Heart left ventricle (tissue), 16 donors: ENCODE measurements at regions of chr18 and their contacts with region 1.

Region 1: GRCh38 chr18:34493099-34493544 is 217.0 kb upstream of the DTNA start:
- DNase-seq: peak; percentile 83 to 91 (median 84)
- ATAC-seq: peak; percentile 89 to 95 (median 92)
- H3K4me3 ChIP-seq: peak overlapping the region; percentile 37 to 73 (median 66)
- H3K27ac ChIP-seq: peak overlapping the region; percentile 72 to 91 (median 85)
- H3K4me1 ChIP-seq: peaks cover 0 to 20% (median 9%) of the 10 kb centered on the region in 12 donors
- H3K27me3 ChIP-seq: peaks cover 0 to 12% (median 0%) of the 10 kb centered on the region in 9 donors
- CTCF ChIP-seq: no peak
- POLR2A ChIP-seq: no peak

Region 2: GRCh38 chr18:34562252-34562870 is 69.2 kb after region 1 on chr18:
- intact Hi-C with region 1: loop called in 1 of 10 experiments (anchors 10 kb)
- DNase-seq: no peak
- ATAC-seq: peak; percentile 85 to 93 (median 90)
- H3K4me3 ChIP-seq: peak overlapping the region in 4 of 12 donors; percentile 17 to 28 (median 22)
- H3K27ac ChIP-seq: peak overlapping the region; percentile 17 to 81 (median 58)
- H3K4me1 ChIP-seq: peaks cover 0 to 13% (median 2%) of the 10 kb centered on the region in 12 donors
- H3K27me3 ChIP-seq: no peaks in the 10 kb centered on the region
- CTCF ChIP-seq: no peak
- POLR2A ChIP-seq: no peak

Region 3: DNA sequence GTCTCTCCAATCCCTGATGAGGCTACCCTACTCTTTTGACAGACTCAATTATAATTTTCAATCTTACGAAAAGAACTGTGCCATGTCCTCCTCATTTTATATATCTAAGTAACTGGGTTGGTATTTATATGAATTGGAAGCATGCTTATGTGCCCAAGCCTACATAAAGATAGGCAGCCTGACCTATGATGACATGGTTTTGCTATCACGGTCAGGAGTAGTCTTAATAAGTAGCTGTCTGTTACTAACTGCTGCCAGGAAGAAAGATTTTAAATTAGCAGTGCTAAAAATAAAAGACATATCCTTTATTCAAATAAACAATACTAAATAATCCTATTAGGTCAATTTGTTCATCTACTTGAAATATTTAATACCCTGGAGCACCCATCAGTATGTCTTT is 114.9 kb after region 1 on chr18:
- intact Hi-C with region 1: no loop called
- DNase-seq: no peak
- ATAC-seq: peak in 3 of 4 donors; percentile 33 to 70 (median 66)
- H3K4me3 ChIP-seq: no peak overlapping the region
- H3K27ac ChIP-seq: peak overlapping the region in 9 of 12 donors; percentile 3 to 53 (median 33)
- H3K4me1 ChIP-seq: peaks cover 0 to 47% (median 15%) of the 10 kb centered on the region in 12 donors
- H3K27me3 ChIP-seq: peaks cover 0 to 2% (median 0%) of the 10 kb centered on the region in 9 donors
- CTCF ChIP-seq: no peak
- POLR2A ChIP-seq: no peak

Region 4: DNA sequence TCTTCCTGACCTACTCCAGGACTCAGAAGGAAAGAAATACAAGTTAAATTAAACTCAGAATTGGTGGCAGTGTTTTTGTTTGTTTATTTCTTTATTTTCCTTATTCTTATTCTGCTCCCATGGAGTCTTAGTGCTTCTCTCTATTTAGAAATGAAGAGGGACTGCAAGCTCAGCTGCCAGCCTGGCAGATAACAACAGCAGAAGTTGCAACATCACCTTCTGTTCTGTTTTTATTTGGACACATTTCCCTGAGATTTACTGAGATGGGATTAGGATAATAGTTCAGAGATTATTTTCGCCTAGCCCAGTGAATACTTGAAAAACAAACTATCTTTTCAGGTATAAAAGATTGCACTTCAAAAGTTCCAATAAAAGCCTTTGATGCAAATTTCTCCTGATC is 146.6 kb after region 1 on chr18:
- intact Hi-C with region 1: loop called in 2 of 10 experiments (anchors 10 kb)
- DNase-seq: no peak
- ATAC-seq: peak in 2 of 4 donors; percentile 49 to 61
- H3K4me3 ChIP-seq: no peak overlapping the region
- H3K27ac ChIP-seq: peak overlapping the region in 1 of 12 donors; percentile 7
- H3K4me1 ChIP-seq: peaks cover 0 to 26% (median 5%) of the 10 kb centered on the region in 12 donors
- H3K27me3 ChIP-seq: no peaks in the 10 kb centered on the region
- CTCF ChIP-seq: no peak
- POLR2A ChIP-seq: no peak

Region 5: DNA sequence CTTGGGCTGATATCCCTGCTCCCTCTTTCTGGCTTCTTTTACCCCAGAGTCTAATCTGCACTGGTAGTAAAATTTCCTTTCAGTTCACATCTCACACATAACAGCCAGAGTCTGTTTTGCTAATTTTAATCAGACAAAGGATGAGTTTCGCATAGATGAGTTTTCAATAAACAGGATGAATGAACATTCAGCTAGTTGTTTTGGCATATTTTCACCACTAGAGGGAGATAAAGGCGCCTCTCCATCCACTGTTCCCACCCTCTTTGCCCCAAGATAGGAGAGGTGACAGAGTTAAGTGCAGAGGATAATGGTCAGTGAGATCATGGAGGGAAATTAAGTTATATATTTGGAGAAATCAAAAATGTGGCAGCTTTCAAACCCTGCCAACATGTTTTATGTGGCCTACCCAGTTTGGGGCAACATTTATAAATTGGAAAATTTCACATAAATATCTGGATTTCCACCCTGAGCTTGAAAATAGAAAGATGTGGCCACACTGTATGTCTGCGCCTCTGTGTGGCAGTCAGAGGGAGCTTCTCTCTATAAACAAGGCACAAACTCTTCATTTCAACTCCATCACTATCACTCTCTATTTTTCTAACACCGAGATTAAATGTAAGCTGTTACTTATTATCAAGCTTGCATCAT is 168.5 kb after region 1 on chr18:
- intact Hi-C with region 1: loop called in 4 of 10 experiments (anchors 2 to 5 kb)
- DNase-seq: no peak
- ATAC-seq: peak in 3 of 4 donors; percentile 57 to 67 (median 62)
- H3K4me3 ChIP-seq: no peak overlapping the region
- H3K27ac ChIP-seq: peak overlapping the region in 6 of 12 donors; percentile 7 to 92 (median 82)
- H3K4me1 ChIP-seq: peaks cover 0 to 55% (median 18%) of the 10 kb centered on the region in 12 donors
- H3K27me3 ChIP-seq: no peaks in the 10 kb centered on the region
- CTCF ChIP-seq: peak; percentile 67 to 83 (median 76)
- POLR2A ChIP-seq: no peak